MCF 10A (cell line): ENCODE measurements at regions of chr20 and their contacts with region 1.

Region 1: DNA sequence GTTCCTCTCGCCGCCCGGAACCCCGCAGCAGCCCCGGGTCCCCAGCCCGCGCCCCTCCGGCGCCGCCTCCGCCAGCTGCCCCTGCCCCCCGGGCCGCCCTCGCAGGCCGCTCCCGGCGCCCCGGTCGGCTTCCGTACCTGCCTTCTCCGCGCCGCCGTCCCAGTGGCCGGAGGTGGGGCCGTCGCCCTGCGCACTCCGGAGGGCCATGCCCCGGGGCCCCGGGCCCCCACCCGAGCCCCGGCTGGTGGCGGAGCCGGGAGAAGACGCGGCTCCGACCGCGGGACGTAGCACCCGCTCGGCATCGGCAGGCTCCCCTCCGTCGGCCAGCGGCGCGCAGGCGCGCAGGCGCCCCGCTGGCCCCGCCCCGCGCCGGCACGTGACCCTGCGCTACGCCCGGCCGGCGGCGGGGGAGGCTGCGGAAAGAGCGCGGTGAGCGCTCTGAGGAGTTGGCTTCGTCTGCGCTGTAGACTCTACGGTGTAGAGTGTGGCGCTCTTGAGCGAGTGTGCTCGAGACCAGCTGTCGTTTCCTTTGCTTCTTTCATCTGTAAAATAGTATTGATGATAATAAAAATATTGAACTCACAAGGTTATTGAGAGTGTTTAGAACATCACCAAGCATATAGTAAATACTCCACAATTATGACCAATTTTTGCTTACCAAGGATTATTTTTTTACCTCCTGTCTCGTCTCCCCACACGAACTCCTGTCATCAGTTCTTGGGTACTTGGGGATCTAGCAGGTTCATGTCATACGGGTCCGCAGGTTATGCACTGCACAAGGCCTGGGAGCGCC is at the start of gene TBC1D20:
- DNase-seq: peak; percentile 83
- H3K4me3 Mint-ChIP-seq: peak within 1 kb of the TSS; percentile 93
- H3K27ac Mint-ChIP-seq: peak within 1 kb of the TSS; percentile 75
- H3K4me1 Mint-ChIP-seq: peaks cover 23% of the 10 kb centered on the region
- H3K27me3 Mint-ChIP-seq: no peaks in the 10 kb centered on the region
- CTCF ChIP-seq: no peak
- total RNA-seq, gene TBC1D20: 32.5 and 36.0 TPM in 2 replicates

Region 2: DNA sequence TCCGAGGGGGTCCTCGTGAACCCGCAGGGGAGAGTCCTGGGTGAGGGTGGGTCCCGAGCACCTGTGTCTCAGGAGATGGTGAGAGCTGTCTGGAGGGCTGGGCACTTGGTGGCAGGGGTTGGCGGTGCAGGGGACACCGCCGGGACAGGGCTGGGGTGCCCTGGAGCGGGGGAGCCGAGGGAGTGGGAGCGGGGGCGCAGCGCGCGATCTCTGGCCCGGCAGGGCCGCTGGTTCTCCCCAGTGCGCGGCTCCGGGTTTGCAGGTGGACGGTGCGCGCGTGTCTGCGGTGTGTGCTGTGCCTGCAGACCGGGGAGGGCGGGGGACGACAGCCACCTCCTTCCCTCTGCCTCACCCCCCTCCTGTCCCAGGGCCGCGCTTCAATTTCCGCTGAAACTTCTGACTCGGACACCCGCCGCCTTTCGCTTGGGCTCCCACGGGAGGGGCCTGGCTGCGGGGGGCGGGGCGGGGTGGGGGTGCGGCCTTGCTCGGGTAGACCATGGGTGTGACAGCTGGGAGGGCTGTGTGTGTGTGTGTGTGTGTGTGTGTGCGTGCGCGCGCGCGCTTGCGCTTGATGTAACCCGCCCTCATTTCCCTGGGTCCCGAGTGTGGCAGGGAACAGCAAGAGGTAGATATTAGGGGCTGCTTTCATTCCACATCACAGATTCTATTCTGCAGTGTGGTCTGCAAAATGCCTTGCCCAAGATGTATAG is 80.7 kb before region 1 on chr20:
- CTCF ChIA-PET with region 1: interaction called, 5 read pairs
- POLR2A ChIA-PET with region 1: interaction called, 12 read pairs
- intact Hi-C with region 1: no loop called
- DNase-seq: peak; percentile 81
- H3K4me3 Mint-ChIP-seq: peak overlapping the region; percentile 79
- H3K27ac Mint-ChIP-seq: no peak overlapping the region
- H3K4me1 Mint-ChIP-seq: peaks cover 25% of the 10 kb centered on the region
- H3K27me3 Mint-ChIP-seq: no peaks in the 10 kb centered on the region
- CTCF ChIP-seq: no peak

Region 3: GRCh38 chr20:444862-445426 is 17.5 kb before region 1 on chr20:
- CTCF ChIA-PET with region 1: interaction called, 8 read pairs
- POLR2A ChIA-PET with region 1: interaction called, 44 read pairs
- intact Hi-C with region 1: no loop called
- DNase-seq: peak; percentile 86
- H3K4me3 Mint-ChIP-seq: no peak overlapping the region
- H3K27ac Mint-ChIP-seq: peak overlapping the region; percentile 47
- H3K4me1 Mint-ChIP-seq: peaks cover 11% of the 10 kb centered on the region
- H3K27me3 Mint-ChIP-seq: no peaks in the 10 kb centered on the region
- CTCF ChIP-seq: no peak

Region 4: DNA sequence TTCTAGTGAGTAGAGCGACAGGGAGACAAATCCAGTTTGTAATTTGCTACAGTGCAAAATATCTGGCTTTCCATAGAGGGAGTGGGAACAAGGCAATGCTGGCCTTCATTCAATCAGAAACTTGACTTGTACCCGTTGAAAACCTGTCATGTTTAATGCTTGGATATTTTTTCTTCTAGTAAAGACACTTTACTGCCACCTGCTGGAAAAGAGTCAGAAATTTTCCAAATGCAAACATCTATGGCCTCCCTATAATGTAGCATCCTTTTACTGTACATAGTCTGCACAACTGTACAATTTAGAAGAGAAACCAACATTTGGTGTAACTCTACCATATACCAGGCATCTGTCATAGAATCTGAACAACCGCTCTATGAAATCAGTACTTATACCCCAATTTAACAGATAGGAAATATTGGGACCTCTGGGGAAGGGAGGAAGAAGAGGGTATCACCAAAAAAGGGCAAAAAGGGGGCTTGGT is 16.6 kb after region 1 on chr20:
- CTCF ChIA-PET with region 1: interaction called, 10 read pairs
- POLR2A ChIA-PET with region 1: interaction called, 13 read pairs
- intact Hi-C with region 1: no loop called
- DNase-seq: peak; percentile 71
- H3K4me3 Mint-ChIP-seq: no peak overlapping the region
- H3K27ac Mint-ChIP-seq: no peak overlapping the region
- H3K4me1 Mint-ChIP-seq: peaks cover 11% of the 10 kb centered on the region
- H3K27me3 Mint-ChIP-seq: no peaks in the 10 kb centered on the region
- CTCF ChIP-seq: peak; percentile 51

Region 5: GRCh38 chr20:543369-544152 is 81.2 kb after region 1 on chr20 and contains the start of gene CSNK2A1:
- CTCF ChIA-PET with region 1: no interaction called
- POLR2A ChIA-PET with region 1: interaction called, 12 read pairs
- intact Hi-C with region 1: no loop called
- DNase-seq: peak; percentile 94
- H3K4me3 Mint-ChIP-seq: peak within 1 kb of the TSS; percentile 77
- H3K27ac Mint-ChIP-seq: peak within 1 kb of the TSS; percentile 99
- H3K4me1 Mint-ChIP-seq: peaks cover 27% of the 10 kb centered on the region
- H3K27me3 Mint-ChIP-seq: no peaks in the 10 kb centered on the region
- CTCF ChIP-seq: no peak
- total RNA-seq, gene CSNK2A1: 271 and 297 TPM in 2 replicates

Region 6: DNA sequence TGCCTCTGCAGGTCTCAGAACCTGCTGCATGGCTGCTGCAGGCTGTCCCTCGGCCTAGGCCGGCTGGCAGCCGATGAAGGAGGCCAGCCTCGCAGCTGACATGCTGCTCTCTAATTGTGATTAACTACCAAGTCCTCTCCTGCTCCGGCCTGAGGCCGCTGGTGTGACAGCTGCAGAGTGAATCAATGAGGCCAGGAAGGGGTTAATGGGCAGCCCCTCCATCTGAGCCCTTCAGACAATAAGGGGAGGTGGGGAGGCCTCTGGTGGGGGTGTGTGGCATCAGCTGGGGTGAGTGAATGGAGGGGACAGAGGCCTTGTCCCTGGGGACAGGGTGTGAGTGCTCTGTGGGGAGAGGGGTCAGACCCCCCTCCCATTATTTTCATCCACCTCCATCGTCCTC is 271.5 kb after region 1 on chr20:
- CTCF ChIA-PET with region 1: interaction called, 3 read pairs
- POLR2A ChIA-PET with region 1: no interaction called
- intact Hi-C with region 1: loop called (anchors 5 kb)
- DNase-seq: no peak
- H3K4me3 Mint-ChIP-seq: no peak overlapping the region
- H3K27ac Mint-ChIP-seq: no peak overlapping the region
- H3K4me1 Mint-ChIP-seq: no peaks in the 10 kb centered on the region
- H3K27me3 Mint-ChIP-seq: peaks cover 38% of the 10 kb centered on the region
- CTCF ChIP-seq: no peak